ENCODE measurements at regions of chr11 and their contacts with region 1.

Region 1: DNA sequence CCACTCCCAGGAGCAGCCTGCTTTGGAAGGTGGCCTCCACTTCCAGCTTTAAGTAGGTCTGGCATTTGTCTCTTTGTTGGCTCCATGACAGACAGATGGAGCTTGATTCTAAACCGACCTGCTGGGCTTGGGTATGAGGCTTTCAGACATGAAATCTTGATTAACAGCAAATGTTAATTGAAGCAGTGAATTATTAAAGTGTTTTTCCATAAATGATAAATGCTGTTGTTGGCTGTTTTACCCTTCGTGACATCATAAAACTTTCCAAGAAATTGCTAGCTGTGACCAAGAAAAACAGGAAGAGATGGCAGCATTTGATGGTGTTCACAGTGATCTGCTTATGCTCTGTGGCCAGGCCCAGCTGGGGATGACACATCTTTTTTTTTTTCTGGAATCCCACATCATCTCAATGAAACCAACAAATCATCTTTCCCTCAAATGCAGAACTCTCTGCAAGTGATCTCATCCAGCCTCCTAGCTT is 66.1 kb downstream of the RBMXL2 start:
- DNase-seq: no peak
- H3K4me3 ChIP-seq: no peak overlapping the region
- H3K4me1 ChIP-seq: no peaks in the 10 kb centered on the region
- H3K27me3 ChIP-seq: no peaks in the 10 kb centered on the region

Region 2: GRCh38 chr11:7555052-7555699 is 400.3 kb after region 1 on chr11:
- in situ Hi-C with region 1: no loop called
- DNase-seq: no peak
- H3K4me3 ChIP-seq: no peak overlapping the region
- H3K4me1 ChIP-seq: no peaks in the 10 kb centered on the region
- H3K27me3 ChIP-seq: no peaks in the 10 kb centered on the region

Region 3: DNA sequence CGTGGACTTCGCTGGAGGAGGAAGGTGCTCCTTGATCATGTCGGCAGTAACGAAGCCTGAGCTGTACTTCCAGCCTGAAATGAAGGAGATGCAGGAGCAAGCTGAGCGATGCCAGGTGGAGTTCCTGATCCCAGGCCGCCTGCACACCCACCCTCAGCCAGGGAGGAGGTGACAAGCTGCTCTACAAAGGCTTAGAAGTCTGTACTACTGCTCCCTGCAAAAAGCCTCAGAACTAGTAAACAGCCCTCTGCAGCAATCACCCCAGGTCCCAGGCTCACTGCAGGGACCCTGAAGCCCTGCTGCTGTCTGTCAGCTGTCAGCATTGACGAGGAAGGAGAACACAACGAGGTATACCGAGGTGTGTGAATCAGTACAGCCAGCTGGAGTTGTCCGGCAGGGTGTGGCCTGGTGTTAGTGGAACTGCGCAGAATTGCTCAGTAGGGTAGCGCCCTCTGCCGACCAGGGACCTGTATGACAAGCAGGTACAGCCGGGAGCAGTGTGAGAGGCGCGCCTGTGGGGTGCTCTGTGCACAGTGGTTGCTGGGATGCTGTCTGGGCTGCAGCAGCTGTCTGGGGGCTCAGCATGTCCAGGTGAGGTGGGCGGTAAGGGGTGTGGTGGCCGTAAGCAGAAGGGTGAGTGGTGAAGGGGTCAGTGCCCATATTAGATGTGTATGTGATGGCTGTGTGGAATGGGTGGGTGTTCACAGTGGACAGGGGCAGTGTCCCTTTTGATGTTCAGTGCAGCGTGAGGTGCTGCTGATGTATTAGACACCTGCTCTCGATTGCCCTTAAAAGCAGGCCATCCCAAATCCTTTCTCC is 510.8 kb after region 1 on chr11:
- in situ Hi-C with region 1: loop called (anchors 25 kb)
- DNase-seq: peak; percentile 68 to 94
- H3K4me3 ChIP-seq: no peak overlapping the region
- H3K4me1 ChIP-seq: peaks cover 21% of the 10 kb centered on the region
- H3K27me3 ChIP-seq: no peaks in the 10 kb centered on the region